ENCODE measurements at regions of chr3 and their contacts with region 1.

Region 1: GRCh38 chr3:40615110-40615915 is 90.6 kb downstream of the ZNF621 start:
- DNase-seq: no peak
- H3K4me3 ChIP-seq: no peak overlapping the region
- H3K27ac ChIP-seq: no peak overlapping the region
- H3K27me3 ChIP-seq: peaks cover 20% of the 10 kb centered on the region
- CTCF ChIP-seq: no peak

Region 2: GRCh38 chr3:42148982-42149432 is 1533.7 kb after region 1 on chr3:
- CTCF ChIA-PET with region 1: interaction called, 10 read pairs
- POLR2A ChIA-PET with region 1: no interaction called
- DNase-seq: peak; percentile 59
- H3K4me3 ChIP-seq: no peak overlapping the region
- H3K27ac ChIP-seq: no peak overlapping the region
- H3K27me3 ChIP-seq: no peaks in the 10 kb centered on the region
- CTCF ChIP-seq: no peak